Caco-2 (cell line): ENCODE measurements at regions of chr10 and their contacts with region 1.

Region 1: GRCh38 chr10:93816123-93816747 is 58.5 kb downstream of the LGI1 start:
- DNase-seq: peak; percentile 66 to 71
- H3K4me3 ChIP-seq: no peak overlapping the region
- H3K4me3 Mint-ChIP-seq: peak overlapping the region; percentile 7
- H3K27ac Mint-ChIP-seq: peak overlapping the region; percentile 2
- H3K4me1 ChIP-seq: peaks cover 13% of the 10 kb centered on the region
- H3K4me1 Mint-ChIP-seq: peaks cover 13% of the 10 kb centered on the region
- H3K27me3 ChIP-seq: no peaks in the 10 kb centered on the region
- H3K27me3 Mint-ChIP-seq: peaks cover 12% of the 10 kb centered on the region
- CTCF ChIP-seq: peak; percentile 76 to 90

Region 2: GRCh38 chr10:93554760-93555432 is 261.3 kb before region 1 on chr10:
- CTCF ChIA-PET with region 1: interaction called, 15 read pairs
- POLR2A ChIA-PET with region 1: no interaction called
- intact Hi-C with region 1: loop called (anchors 10 kb)
- DNase-seq: peak; percentile 80 to 84
- H3K4me3 ChIP-seq: no peak overlapping the region
- H3K4me3 Mint-ChIP-seq: no peak overlapping the region
- H3K27ac Mint-ChIP-seq: peak overlapping the region; percentile 53
- H3K4me1 ChIP-seq: peaks cover 43% of the 10 kb centered on the region
- H3K4me1 Mint-ChIP-seq: peaks cover 32% of the 10 kb centered on the region
- H3K27me3 ChIP-seq: no peaks in the 10 kb centered on the region
- H3K27me3 Mint-ChIP-seq: no peaks in the 10 kb centered on the region
- CTCF ChIP-seq: peak; percentile 61 to 89

Region 3: DNA sequence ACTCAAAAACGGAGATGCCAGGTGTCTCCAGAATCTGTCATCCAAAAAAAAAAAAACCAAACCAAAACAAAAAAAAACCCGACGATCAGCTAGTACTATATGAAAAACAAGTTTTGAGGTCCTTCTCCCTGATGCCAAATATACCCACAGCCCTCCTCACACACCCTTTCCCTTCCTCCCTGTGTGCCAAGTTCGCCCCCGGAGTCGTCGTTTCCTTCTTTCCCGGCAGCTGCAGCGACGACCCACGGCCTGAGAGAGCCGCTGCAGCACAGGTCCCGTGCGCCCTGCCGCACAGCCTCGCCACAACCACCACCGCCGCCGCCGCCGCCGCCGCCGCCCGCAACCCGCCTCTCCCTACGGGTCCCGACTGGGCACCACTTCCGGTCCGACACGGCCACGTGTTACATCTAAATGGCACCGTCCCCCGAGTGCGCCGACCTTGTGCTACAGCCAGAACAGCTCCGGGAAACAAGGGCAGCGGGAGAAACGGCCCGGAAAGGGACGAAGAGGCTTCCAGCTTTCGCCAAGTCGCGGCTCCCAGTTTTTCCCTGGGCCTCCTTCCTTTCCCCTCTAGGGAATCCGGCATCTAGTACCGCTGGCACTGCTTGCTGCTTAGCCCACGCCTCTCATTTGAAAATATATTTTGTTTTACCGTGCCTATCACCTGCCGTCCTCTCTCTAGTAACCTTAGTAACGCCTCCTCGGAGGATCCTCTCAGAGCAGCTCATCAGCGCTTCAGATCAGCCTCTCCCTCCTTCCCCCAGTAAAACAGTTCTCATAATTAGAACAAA is 113.8 kb before region 1 on chr10 and contains the start of gene FRA10AC1:
- CTCF ChIA-PET with region 1: interaction called, 20 read pairs
- POLR2A ChIA-PET with region 1: interaction called, 11 read pairs
- intact Hi-C with region 1: loop called (anchors 1 kb)
- DNase-seq: peak; percentile 94 to 95
- H3K4me3 ChIP-seq: peak within 1 kb of the TSS; percentile 85
- H3K4me3 Mint-ChIP-seq: no peak within 1 kb of the TSS
- H3K27ac Mint-ChIP-seq: no peak within 1 kb of the TSS
- H3K4me1 ChIP-seq: peaks cover 4% of the 10 kb centered on the region; the same call in 1 of the 2 replicates
- H3K4me1 Mint-ChIP-seq: peaks cover 12% of the 10 kb centered on the region
- H3K27me3 ChIP-seq: no peaks in the 10 kb centered on the region
- H3K27me3 Mint-ChIP-seq: no peaks in the 10 kb centered on the region
- CTCF ChIP-seq: peak; percentile 20 to 54
- total RNA-seq, gene FRA10AC1: 12.5 and 15.1 TPM in 2 replicates

Region 4: DNA sequence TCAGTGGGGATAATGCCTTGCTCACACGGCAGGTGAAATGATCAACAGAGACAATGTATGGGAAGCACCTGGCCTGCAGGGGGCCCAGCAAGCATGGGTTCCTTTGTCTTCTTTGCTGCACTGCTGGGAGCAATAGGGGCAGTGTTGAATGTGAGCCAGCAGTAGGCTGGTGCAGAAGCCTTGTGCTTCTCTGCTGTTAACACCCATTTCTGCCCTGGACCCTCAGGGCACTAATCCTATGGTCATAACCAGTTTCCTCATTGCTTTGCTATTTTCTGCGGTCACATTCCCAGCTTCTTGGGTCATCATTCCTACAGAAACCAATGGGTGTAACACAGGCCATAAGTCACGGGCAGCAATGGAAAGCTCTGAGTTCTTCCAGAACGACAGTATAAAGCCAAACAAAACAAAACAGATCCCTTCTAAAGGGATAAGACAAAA is 69.4 kb before region 1 on chr10:
- CTCF ChIA-PET with region 1: interaction called, 87 read pairs
- POLR2A ChIA-PET with region 1: no interaction called
- intact Hi-C with region 1: loop called (anchors 1 kb)
- DNase-seq: peak; percentile 83 to 84
- H3K4me3 ChIP-seq: no peak overlapping the region
- H3K4me3 Mint-ChIP-seq: no peak overlapping the region
- H3K27ac Mint-ChIP-seq: no peak overlapping the region
- H3K4me1 ChIP-seq: peaks cover 9% of the 10 kb centered on the region; the same call in 1 of the 2 replicates
- H3K4me1 Mint-ChIP-seq: peaks cover 5% of the 10 kb centered on the region
- H3K27me3 ChIP-seq: no peaks in the 10 kb centered on the region; the same call in 1 of the 2 replicates
- H3K27me3 Mint-ChIP-seq: no peaks in the 10 kb centered on the region
- CTCF ChIP-seq: peak; percentile 70 to 86

Region 5: DNA sequence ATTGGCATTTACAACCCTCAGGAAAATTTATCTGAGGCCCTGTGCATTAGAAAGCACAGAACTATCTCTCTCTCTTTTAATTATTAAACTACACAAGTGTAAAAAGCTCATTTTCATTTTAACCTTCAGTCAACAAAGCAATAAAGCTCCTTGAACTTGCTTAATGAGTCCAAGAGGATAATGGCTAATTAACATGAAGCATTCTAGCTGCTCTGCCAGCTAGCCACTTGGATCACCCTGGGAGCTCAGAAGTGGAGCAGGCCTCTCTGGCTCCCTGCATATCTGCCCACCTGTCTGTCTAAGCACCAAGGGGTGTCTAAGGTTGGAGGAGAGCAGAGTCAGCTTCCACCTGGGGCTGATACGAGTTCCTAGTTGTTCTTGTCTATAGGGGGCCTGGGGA is 21.6 kb after region 1 on chr10:
- CTCF ChIA-PET with region 1: no interaction called
- POLR2A ChIA-PET with region 1: no interaction called
- intact Hi-C with region 1: no loop called
- DNase-seq: no peak
- H3K4me3 ChIP-seq: no peak overlapping the region
- H3K4me3 Mint-ChIP-seq: no peak overlapping the region
- H3K27ac Mint-ChIP-seq: no peak overlapping the region
- H3K4me1 ChIP-seq: 0 out of 2 replicates have a peak, but pooled peaks cover 3% of the 10 kb centered on the region
- H3K4me1 Mint-ChIP-seq: peaks cover 7% of the 10 kb centered on the region
- H3K27me3 ChIP-seq: no peaks in the 10 kb centered on the region
- H3K27me3 Mint-ChIP-seq: no peaks in the 10 kb centered on the region
- CTCF ChIP-seq: no peak

Region 6: GRCh38 chr10:93859049-93859655 is 42.9 kb after region 1 on chr10:
- CTCF ChIA-PET with region 1: interaction called, 4 read pairs
- POLR2A ChIA-PET with region 1: no interaction called
- intact Hi-C with region 1: loop called (anchors 1 kb)
- DNase-seq: peak in 1 of 2 experiments; percentile 12
- H3K4me3 ChIP-seq: no peak overlapping the region
- H3K4me3 Mint-ChIP-seq: no peak overlapping the region
- H3K27ac Mint-ChIP-seq: no peak overlapping the region
- H3K4me1 ChIP-seq: peaks cover 12% of the 10 kb centered on the region
- H3K4me1 Mint-ChIP-seq: no peaks in the 10 kb centered on the region
- H3K27me3 ChIP-seq: no peaks in the 10 kb centered on the region
- H3K27me3 Mint-ChIP-seq: no peaks in the 10 kb centered on the region
- CTCF ChIP-seq: peak; percentile 33 to 53

Region 7: DNA sequence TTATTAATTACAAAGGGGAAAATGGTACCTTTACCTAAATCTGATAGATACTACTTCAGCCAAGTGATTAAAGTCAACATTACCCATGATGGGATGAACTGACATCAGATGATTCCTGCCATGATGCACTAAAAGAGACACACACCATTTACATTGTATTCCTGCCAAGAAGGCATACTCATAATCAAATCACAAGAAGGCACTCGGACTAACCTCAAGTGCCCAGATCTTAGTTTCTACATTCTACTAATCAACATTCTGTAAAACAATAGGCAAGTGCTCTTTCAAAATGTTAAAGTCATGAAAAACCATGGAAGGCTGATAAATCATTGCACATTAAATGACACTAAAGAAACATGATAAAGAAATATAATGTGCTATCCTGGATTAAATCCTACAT is 121.9 kb after region 1 on chr10:
- CTCF ChIA-PET with region 1: no interaction called
- POLR2A ChIA-PET with region 1: no interaction called
- intact Hi-C with region 1: no loop called
- DNase-seq: no peak
- H3K4me3 ChIP-seq: no peak overlapping the region
- H3K4me3 Mint-ChIP-seq: no peak overlapping the region
- H3K27ac Mint-ChIP-seq: no peak overlapping the region
- H3K4me1 ChIP-seq: no peaks in the 10 kb centered on the region; the same call in 1 of the 2 replicates
- H3K4me1 Mint-ChIP-seq: no peaks in the 10 kb centered on the region
- H3K27me3 ChIP-seq: no peaks in the 10 kb centered on the region
- H3K27me3 Mint-ChIP-seq: peaks cover 6% of the 10 kb centered on the region
- CTCF ChIP-seq: no peak

Region 8: GRCh38 chr10:94320285-94320914 is 504.2 kb after region 1 on chr10:
- CTCF ChIA-PET with region 1: interaction called, 7 read pairs
- POLR2A ChIA-PET with region 1: no interaction called
- intact Hi-C with region 1: loop called (anchors 2 kb)
- DNase-seq: peak; percentile 58 to 77
- H3K4me3 ChIP-seq: no peak overlapping the region
- H3K4me3 Mint-ChIP-seq: no peak overlapping the region
- H3K27ac Mint-ChIP-seq: no peak overlapping the region
- H3K4me1 ChIP-seq: peaks cover 15% of the 10 kb centered on the region
- H3K4me1 Mint-ChIP-seq: no peaks in the 10 kb centered on the region
- H3K27me3 ChIP-seq: no peaks in the 10 kb centered on the region
- H3K27me3 Mint-ChIP-seq: no peaks in the 10 kb centered on the region
- CTCF ChIP-seq: peak; percentile 82 to 85

Region 9: GRCh38 chr10:94429049-94429707 is 612.9 kb after region 1 on chr10:
- CTCF ChIA-PET with region 1: no interaction called
- POLR2A ChIA-PET with region 1: no interaction called
- intact Hi-C with region 1: no loop called
- DNase-seq: no peak
- H3K4me3 ChIP-seq: no peak overlapping the region
- H3K4me3 Mint-ChIP-seq: no peak overlapping the region
- H3K27ac Mint-ChIP-seq: no peak overlapping the region
- H3K4me1 ChIP-seq: no peaks in the 10 kb centered on the region
- H3K4me1 Mint-ChIP-seq: peaks cover 17% of the 10 kb centered on the region
- H3K27me3 ChIP-seq: no peaks in the 10 kb centered on the region
- H3K27me3 Mint-ChIP-seq: no peaks in the 10 kb centered on the region
- CTCF ChIP-seq: no peak